ENCODE measurements at regions of chr2 and their contacts with region 1.

Region 1: GRCh38 chr2:56132138-56132537 is 51.7 kb upstream of the CCDC85A start:
- DNase-seq: peak; percentile 76
- H3K4me3 ChIP-seq: no peak overlapping the region
- H3K27ac ChIP-seq: no peak overlapping the region
- H3K4me1 ChIP-seq: peaks cover 12% of the 10 kb centered on the region
- H3K27me3 ChIP-seq: no peaks in the 10 kb centered on the region
- CTCF ChIP-seq: peak; percentile 30
- POLR2A ChIP-seq: no peak

Region 2: DNA sequence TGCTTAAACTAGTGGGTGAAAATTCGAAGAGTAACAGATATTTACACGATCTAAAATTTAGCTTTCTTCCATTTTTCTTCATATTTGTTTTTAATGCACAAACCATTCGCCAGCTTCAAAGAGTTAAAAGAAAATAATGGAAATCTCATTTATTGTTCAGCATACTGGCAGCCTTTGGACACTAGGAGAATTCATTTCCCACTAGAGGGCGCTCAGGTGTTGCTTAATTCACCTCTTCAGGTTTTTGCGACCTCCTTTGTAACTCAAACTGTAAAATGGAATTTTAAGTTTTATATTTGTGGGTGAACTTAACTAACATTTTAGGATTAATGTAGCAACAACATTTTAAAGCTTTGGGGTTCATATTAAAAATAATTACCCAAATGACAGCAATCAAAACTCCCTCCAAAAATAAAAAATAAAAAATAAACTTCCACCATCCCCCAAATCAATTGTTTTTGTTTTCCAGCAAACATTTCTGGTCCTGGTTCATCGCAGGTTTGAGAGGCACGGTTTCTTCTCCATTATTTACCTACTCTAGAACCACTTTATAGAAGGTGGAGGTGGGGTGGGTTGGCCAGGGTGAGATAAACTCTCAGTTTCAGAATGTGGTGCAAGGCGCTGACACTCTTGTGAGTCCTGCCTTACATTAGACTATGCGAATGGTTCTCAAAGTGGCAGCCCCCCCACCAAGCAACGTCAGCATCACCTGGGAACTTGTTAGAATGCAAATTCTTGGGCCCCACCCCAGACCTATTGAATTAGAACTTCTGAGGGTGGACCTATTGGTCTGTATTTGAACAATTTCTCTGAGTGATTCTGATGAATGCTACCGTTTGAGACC is 413.8 kb before region 1 on chr2:
- CTCF ChIA-PET with region 1: interaction called, 32 read pairs
- POLR2A ChIA-PET with region 1: no interaction called
- dilution Hi-C with region 1: no loop called
- intact Hi-C with region 1: loop called (anchors 1 kb)
- DNase-seq: peak; percentile 77
- H3K4me3 ChIP-seq: no peak overlapping the region
- H3K27ac ChIP-seq: no peak overlapping the region
- H3K4me1 ChIP-seq: peaks cover 7% of the 10 kb centered on the region
- H3K27me3 ChIP-seq: no peaks in the 10 kb centered on the region
- CTCF ChIP-seq: peak; percentile 55 to 65
- POLR2A ChIP-seq: no peak

Region 3: GRCh38 chr2:55862673-55863390 is 269.3 kb before region 1 on chr2:
- CTCF ChIA-PET with region 1: interaction called, 3 read pairs
- POLR2A ChIA-PET with region 1: no interaction called
- dilution Hi-C with region 1: no loop called
- intact Hi-C with region 1: loop called (anchors 5 kb)
- DNase-seq: peak; percentile 98
- H3K4me3 ChIP-seq: no peak overlapping the region
- H3K27ac ChIP-seq: peak overlapping the region; percentile 92
- H3K4me1 ChIP-seq: peaks cover 54% of the 10 kb centered on the region
- H3K27me3 ChIP-seq: no peaks in the 10 kb centered on the region
- CTCF ChIP-seq: no peak
- POLR2A ChIP-seq: peak; percentile 80

Region 4: GRCh38 chr2:55923091-55923981 is 208.8 kb before region 1 on chr2 and contains the start of gene EFEMP1:
- CTCF ChIA-PET with region 1: interaction called, 3 read pairs
- POLR2A ChIA-PET with region 1: no interaction called
- dilution Hi-C with region 1: no loop called
- intact Hi-C with region 1: loop called (anchors 1 kb)
- DNase-seq: peak; percentile 87
- H3K4me3 ChIP-seq: peak within 1 kb of the TSS; percentile 57 to 97 (median 91)
- H3K27ac ChIP-seq: peak within 1 kb of the TSS; percentile 82
- H3K4me1 ChIP-seq: peaks cover 43% of the 10 kb centered on the region
- H3K27me3 ChIP-seq: no peaks in the 10 kb centered on the region
- CTCF ChIP-seq: peak in 1 of 2 donors; percentile 4
- POLR2A ChIP-seq: peak; percentile 96
- total RNA-seq, gene EFEMP1: 2,354 and 2,981 TPM in 2 replicates

Region 5: GRCh38 chr2:56077352-56077915 is 54.7 kb before region 1 on chr2:
- CTCF ChIA-PET with region 1: interaction called, 13 read pairs
- POLR2A ChIA-PET with region 1: no interaction called
- dilution Hi-C with region 1: no loop called
- intact Hi-C with region 1: loop called (anchors 5 kb)
- DNase-seq: peak; percentile 42
- H3K4me3 ChIP-seq: no peak overlapping the region
- H3K27ac ChIP-seq: no peak overlapping the region
- H3K4me1 ChIP-seq: no peaks in the 10 kb centered on the region
- H3K27me3 ChIP-seq: peaks cover 0 to 2% of the 10 kb centered on the region in 2 experiments
- CTCF ChIP-seq: peak; percentile 33 to 58
- POLR2A ChIP-seq: no peak

Region 6: GRCh38 chr2:56099963-56100362 is 32.2 kb before region 1 on chr2:
- CTCF ChIA-PET with region 1: interaction called, 15 read pairs
- POLR2A ChIA-PET with region 1: no interaction called
- dilution Hi-C with region 1: no loop called
- intact Hi-C with region 1: no loop called
- DNase-seq: peak; percentile 18
- H3K4me3 ChIP-seq: no peak overlapping the region
- H3K27ac ChIP-seq: no peak overlapping the region
- H3K4me1 ChIP-seq: peaks cover 4% of the 10 kb centered on the region
- H3K27me3 ChIP-seq: no peaks in the 10 kb centered on the region
- CTCF ChIP-seq: no peak
- POLR2A ChIP-seq: no peak

Region 7: DNA sequence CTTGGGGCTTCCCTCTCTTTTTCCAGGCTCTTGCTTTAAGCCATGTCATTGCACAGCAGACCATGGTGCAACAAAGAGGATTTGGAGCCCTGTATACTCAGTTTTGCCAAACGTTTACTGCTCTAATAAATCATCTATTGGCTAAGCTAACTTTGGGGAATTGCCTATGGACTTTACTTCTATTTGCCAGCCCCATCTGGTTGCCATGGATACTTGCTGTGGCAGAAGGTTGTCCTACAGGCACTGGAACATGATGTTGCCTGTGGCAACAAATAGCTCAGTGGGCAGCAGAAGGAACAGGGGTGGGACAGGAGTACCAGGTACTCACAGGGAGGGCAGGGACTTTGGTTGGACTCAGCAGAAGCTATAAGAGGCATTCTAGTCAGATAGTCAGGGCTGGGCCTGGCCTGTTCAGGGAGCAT is 181.4 kb after region 1 on chr2:
- CTCF ChIA-PET with region 1: no interaction called
- POLR2A ChIA-PET with region 1: no interaction called
- dilution Hi-C with region 1: no loop called
- intact Hi-C with region 1: no loop called
- DNase-seq: no peak
- H3K4me3 ChIP-seq: no peak overlapping the region
- H3K27ac ChIP-seq: no peak overlapping the region
- H3K4me1 ChIP-seq: no peaks in the 10 kb centered on the region
- H3K27me3 ChIP-seq: no peaks in the 10 kb centered on the region
- CTCF ChIP-seq: no peak
- POLR2A ChIP-seq: no peak

Region 8: GRCh38 chr2:57497489-57498096 is 1365.5 kb after region 1 on chr2:
- CTCF ChIA-PET with region 1: interaction called, 4 read pairs
- POLR2A ChIA-PET with region 1: no interaction called
- dilution Hi-C with region 1: no loop called
- intact Hi-C with region 1: loop called (anchors 5 kb)
- DNase-seq: peak; percentile 61
- H3K4me3 ChIP-seq: no peak overlapping the region
- H3K27ac ChIP-seq: no peak overlapping the region
- H3K4me1 ChIP-seq: no peaks in the 10 kb centered on the region
- H3K27me3 ChIP-seq: no peaks in the 10 kb centered on the region
- CTCF ChIP-seq: peak; percentile 65 to 66
- POLR2A ChIP-seq: no peak

Measured in endothelial cell of umbilical vein (primary cell).